Ovary (tissue), 10 donors: ENCODE measurements at regions of chr17 and their contacts with region 1.

Region 1: GRCh38 chr17:1331708-1332107 is 52.2 kb downstream of the TRARG1 start:
- DNase-seq: peak in 1 of 5 donors; percentile 16
- H3K4me3 ChIP-seq: no peak overlapping the region
- H3K27ac ChIP-seq: no peak overlapping the region
- H3K4me1 ChIP-seq: no peaks in the 10 kb centered on the region
- H3K27me3 ChIP-seq: no peaks in the 10 kb centered on the region
- CTCF ChIP-seq: no peak
- EP300 ChIP-seq: no peak
- POLR2A ChIP-seq: no peak

Region 2: DNA sequence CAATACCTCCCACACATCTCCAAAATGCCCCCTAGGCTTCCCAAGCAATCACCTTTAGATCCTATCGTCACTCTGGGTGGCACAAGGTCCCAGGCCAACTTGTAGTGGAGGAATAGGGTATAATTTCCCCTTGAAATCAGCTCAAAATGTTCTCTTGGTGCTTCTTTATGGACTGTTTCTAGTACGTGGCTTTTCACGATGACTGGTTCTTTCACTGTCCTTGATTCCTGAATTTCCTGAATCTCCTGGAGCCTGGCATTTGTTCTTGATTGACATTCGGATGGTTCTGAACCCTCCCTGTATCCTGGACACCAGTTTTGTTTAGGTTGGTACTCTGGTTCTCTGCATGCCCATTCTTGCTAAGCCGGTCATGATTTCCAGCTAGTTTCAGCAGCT is 610.2 kb before region 1 on chr17:
- intact Hi-C with region 1: no loop called
- DNase-seq: no peak
- H3K4me3 ChIP-seq: no peak overlapping the region
- H3K27ac ChIP-seq: no peak overlapping the region
- H3K4me1 ChIP-seq: no peaks in the 10 kb centered on the region
- H3K27me3 ChIP-seq: no peaks in the 10 kb centered on the region
- CTCF ChIP-seq: no peak
- EP300 ChIP-seq: no peak
- POLR2A ChIP-seq: no peak

Region 3: GRCh38 chr17:1260086-1260769 is 71.5 kb before region 1 on chr17:
- intact Hi-C with region 1: loop called in 1 of 4 experiments (anchors 5 kb)
- DNase-seq: no peak
- H3K4me3 ChIP-seq: peak overlapping the region; percentile 36
- H3K27ac ChIP-seq: no peak overlapping the region
- H3K4me1 ChIP-seq: no peaks in the 10 kb centered on the region
- H3K27me3 ChIP-seq: no peaks in the 10 kb centered on the region
- CTCF ChIP-seq: no peak
- EP300 ChIP-seq: no peak
- POLR2A ChIP-seq: no peak

Region 4: GRCh38 chr17:1286379-1287106 is 45.2 kb before region 1 on chr17:
- intact Hi-C with region 1: loop called in 2 of 4 experiments (anchors 5 to 10 kb)
- DNase-seq: no peak
- H3K4me3 ChIP-seq: no peak overlapping the region
- H3K27ac ChIP-seq: no peak overlapping the region
- H3K4me1 ChIP-seq: no peaks in the 10 kb centered on the region
- H3K27me3 ChIP-seq: no peaks in the 10 kb centered on the region
- CTCF ChIP-seq: no peak
- EP300 ChIP-seq: no peak
- POLR2A ChIP-seq: no peak

Region 5: GRCh38 chr17:1294157-1294717 is 37.5 kb before region 1 on chr17:
- intact Hi-C with region 1: loop called in 2 of 4 experiments (anchors 5 to 10 kb)
- DNase-seq: no peak
- H3K4me3 ChIP-seq: no peak overlapping the region
- H3K27ac ChIP-seq: no peak overlapping the region
- H3K4me1 ChIP-seq: peaks cover 2% of the 10 kb centered on the region
- H3K27me3 ChIP-seq: no peaks in the 10 kb centered on the region
- CTCF ChIP-seq: no peak
- EP300 ChIP-seq: no peak
- POLR2A ChIP-seq: no peak

Region 6: DNA sequence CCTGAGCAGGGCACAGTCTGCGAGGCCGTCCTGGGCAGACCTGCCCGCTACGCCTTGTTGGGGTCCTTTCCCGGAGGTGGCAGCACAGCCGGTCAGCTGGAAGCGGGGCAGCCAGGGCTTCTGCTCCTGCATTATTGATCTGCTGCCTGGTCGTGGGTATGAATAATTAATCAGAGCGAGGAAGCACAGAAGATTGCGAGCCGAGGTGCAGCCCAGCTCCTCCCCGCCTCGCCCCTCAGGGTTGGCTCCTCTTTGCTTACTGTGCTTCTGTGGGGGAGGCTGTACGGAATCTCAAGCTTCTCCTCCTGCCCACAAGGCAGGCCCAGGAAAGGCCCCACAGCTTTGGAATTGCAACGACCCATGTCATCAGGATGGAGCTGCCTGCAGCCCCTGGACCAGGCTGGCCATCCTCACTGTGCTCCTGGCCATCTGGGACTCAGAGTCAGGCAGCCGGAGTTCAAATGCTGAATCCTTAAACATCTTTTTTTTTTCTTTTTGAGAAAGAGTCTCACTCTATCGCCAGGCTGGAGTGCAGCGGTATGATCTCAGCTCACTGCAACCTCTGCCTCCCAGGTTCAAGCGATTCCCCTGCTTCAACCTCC is 26.6 kb before region 1 on chr17:
- intact Hi-C with region 1: no loop called
- DNase-seq: no peak
- H3K4me3 ChIP-seq: no peak overlapping the region
- H3K27ac ChIP-seq: no peak overlapping the region
- H3K4me1 ChIP-seq: no peaks in the 10 kb centered on the region
- H3K27me3 ChIP-seq: no peaks in the 10 kb centered on the region
- CTCF ChIP-seq: no peak
- EP300 ChIP-seq: no peak
- POLR2A ChIP-seq: no peak

Region 7: GRCh38 chr17:1455797-1456599 is 124.3 kb after region 1 on chr17 and contains the start of gene CRK:
- intact Hi-C with region 1: no loop called
- DNase-seq: peak; percentile 96 to 99 (median 98)
- H3K4me3 ChIP-seq: peak within 1 kb of the TSS; percentile 72
- H3K27ac ChIP-seq: peak within 1 kb of the TSS; percentile 84 to 93
- H3K4me1 ChIP-seq: peaks cover 9% of the 10 kb centered on the region
- H3K27me3 ChIP-seq: no peaks in the 10 kb centered on the region
- CTCF ChIP-seq: peak in 2 of 3 donors; percentile 24 to 28
- EP300 ChIP-seq: peak; percentile 63
- POLR2A ChIP-seq: peak; percentile 97
- total RNA-seq, gene CRK: 40.0 to 60.6 (median 48.8) TPM